H1 (cell line): ENCODE measurements at regions of chr6 and their contacts with region 1.

Region 1: DNA sequence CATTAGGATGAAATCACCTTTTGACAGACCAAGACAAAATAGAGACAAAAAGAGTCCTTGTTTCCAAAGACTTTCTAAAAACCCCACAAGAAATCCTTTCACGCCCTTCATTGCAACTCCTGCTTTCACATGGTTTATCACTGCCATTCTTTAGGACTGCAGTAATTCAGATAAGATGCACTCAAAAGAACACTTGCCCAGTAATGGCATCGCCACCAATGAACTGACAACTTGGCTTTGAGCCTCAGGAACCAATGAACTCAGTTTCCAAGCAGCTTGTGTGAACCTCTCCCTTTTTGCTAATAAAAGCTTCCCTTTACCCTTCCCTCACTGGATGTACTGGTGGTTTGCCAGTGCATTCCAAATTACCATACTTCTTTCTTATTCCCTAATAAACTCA is 21.8 kb downstream of the OSTM1 start:
- DNase-seq: no peak
- H3K4me3 ChIP-seq: no peak overlapping the region
- H3K27ac ChIP-seq: no peak overlapping the region
- H3K4me1 ChIP-seq: no peaks in the 10 kb centered on the region
- H3K27me3 ChIP-seq: no peaks in the 10 kb centered on the region
- CTCF ChIP-seq: no peak
- EP300 ChIP-seq: no peak
- POLR2A ChIP-seq: no peak
- RAD21 ChIP-seq: no peak

Region 2: DNA sequence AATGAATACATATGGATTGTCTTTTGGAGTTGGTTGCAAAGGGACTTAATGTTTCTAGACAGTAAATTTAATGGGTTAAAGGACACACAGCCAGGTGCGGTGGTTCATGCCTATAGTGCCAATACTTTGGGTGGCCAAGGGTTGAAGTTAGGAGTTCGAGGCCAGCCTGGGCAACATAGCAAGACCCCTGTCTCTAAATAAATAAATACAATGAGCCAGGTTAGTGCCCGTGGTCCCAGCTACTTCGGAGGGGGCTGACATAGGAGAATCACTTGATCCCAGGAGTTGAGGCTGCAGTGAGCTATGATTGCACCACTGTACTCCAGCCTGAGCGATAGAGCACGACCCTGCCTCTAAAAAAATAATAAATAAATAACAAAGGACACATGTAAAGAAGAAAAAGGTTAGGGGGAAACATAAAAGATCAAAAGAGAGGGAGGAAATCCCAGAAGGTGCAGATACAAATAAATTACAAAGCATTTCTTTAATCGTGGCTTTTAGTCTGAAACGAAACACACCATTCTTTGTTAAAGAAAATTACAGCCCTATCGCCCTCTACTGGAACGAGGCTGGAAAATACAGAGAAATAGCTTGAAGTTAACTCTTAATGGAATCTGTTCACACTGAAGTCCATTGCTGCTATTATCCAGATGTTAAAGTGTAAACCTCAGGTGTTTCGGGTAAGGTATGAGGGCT is 186.0 kb before region 1 on chr6:
- CTCF ChIA-PET with region 1: interaction called, 10 read pairs
- POLR2A ChIA-PET with region 1: no interaction called
- DNase-seq: no peak
- H3K4me3 ChIP-seq: no peak overlapping the region
- H3K27ac ChIP-seq: no peak overlapping the region
- H3K4me1 ChIP-seq: peaks cover 0 to 14% (median 10%) of the 10 kb centered on the region in 4 experiments
- H3K27me3 ChIP-seq: no peaks in the 10 kb centered on the region
- CTCF ChIP-seq: peak in 2 of 3 experiments; percentile 44 to 59; a peak in 2 of 4 replicates
- EP300 ChIP-seq: no peak
- POLR2A ChIP-seq: no peak; a peak in 1 of 3 replicates
- RAD21 ChIP-seq: peak; percentile 39 to 49

Region 3: GRCh38 chr6:108039681-108040080 is 13.0 kb before region 1 on chr6:
- CTCF ChIA-PET with region 1: interaction called, 18 read pairs
- POLR2A ChIA-PET with region 1: no interaction called
- DNase-seq: no peak
- H3K4me3 ChIP-seq: no peak overlapping the region
- H3K27ac ChIP-seq: no peak overlapping the region
- H3K4me1 ChIP-seq: peaks cover 0 to 4% (median 0%) of the 10 kb centered on the region in 4 experiments; a peak in 1 of 7 replicates
- H3K27me3 ChIP-seq: no peaks in the 10 kb centered on the region
- CTCF ChIP-seq: no peak
- EP300 ChIP-seq: no peak
- POLR2A ChIP-seq: no peak
- RAD21 ChIP-seq: no peak